ENCODE measurements at regions of chr5 and their contacts with region 1.

Region 1: DNA sequence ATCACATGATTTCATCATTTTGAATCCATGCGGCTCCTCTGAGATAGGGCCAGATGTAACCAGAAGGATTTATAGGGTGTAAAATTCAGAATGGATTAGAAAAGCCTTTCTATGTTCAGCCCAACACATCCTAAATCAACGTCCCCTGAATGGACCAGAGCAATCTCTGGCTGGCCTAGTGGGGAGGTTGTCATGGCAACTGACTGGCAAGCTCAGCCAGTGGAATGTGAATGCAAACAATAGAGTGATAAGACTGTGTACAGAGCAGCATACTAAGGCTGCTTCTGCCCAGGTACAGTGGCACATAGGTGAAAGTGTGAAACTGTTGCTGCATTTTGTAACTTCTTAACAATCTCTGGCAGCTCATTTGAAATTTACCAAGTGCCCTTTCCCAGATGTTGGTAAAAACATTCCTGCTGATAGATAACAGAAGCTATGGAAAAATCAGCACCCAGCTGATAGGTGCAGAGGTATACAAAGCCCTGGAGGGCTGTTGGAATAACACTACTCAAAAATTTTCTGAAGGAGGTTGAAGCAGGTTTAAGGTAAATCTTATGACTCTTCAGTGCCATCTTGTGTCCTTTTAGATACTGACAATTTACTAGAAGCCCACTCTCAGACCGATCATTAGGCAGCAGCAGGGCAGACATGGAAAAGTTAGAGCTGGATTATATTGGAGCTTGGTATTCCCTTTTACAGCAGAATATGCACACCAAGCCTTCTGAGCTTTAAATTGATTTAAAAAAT is 267.2 kb downstream of the RAB3C start:
- DNase-seq: no peak
- H3K4me3 ChIP-seq: no peak overlapping the region
- H3K27ac ChIP-seq: no peak overlapping the region
- H3K4me1 ChIP-seq: no peaks in the 10 kb centered on the region
- H3K27me3 ChIP-seq: no peaks in the 10 kb centered on the region
- CTCF ChIP-seq: peak in 4 of 6 experiments; percentile 23 to 40 (median 38)
- POLR2A ChIP-seq: no peak

Region 2: DNA sequence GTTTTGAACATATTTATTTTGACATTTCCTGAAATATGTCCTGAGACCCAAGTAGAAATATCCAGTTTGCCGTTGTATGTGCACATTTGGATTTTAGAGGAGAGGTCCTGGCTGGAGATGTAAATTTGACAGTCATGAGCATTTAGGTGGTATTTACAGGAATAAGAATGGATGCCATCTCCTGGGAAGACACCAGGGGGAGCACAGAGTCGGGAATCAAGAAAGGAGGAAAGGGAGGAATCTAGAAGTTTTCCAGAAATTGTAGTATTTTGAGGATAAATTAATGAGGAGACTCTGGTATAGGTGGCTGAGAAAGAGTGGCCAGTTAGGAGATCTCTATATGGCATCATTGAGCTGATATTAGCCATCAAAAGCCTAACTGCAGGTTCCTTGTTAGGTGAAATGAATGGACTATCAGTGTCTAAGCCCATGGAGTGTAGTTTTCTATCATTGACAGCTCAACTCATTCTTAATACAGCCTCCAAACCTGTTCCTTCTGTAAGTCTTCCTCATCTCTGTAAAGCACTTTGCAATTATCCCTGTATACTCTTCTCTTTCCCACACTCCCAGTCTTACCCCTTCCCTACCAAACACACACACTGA is 351.7 kb before region 1 on chr5:
- intact Hi-C with region 1: loop called (anchors 10 kb)
- DNase-seq: peak; percentile 14 to 24
- H3K4me3 ChIP-seq: no peak overlapping the region
- H3K27ac ChIP-seq: no peak overlapping the region
- H3K4me1 ChIP-seq: peaks cover 0 to 3% of the 10 kb centered on the region in 2 donors
- H3K27me3 ChIP-seq: no peaks in the 10 kb centered on the region
- CTCF ChIP-seq: peak; percentile 26 to 63 (median 38)
- POLR2A ChIP-seq: no peak